ENCODE measurements at regions of chr2 and their contacts with region 1.

Region 1: GRCh38 chr2:216188956-216189355 is 79.8 kb downstream of the XRCC5 start:
- DNase-seq: no peak
- H3K4me3 ChIP-seq: no peak overlapping the region
- H3K4me3 Mint-ChIP-seq: no peak overlapping the region
- H3K27ac Mint-ChIP-seq: no peak overlapping the region
- H3K4me1 ChIP-seq: peaks cover 36% of the 10 kb centered on the region
- H3K4me1 Mint-ChIP-seq: peaks cover 27% of the 10 kb centered on the region
- H3K27me3 ChIP-seq: no peaks in the 10 kb centered on the region
- H3K27me3 Mint-ChIP-seq: no peaks in the 10 kb centered on the region
- CTCF ChIP-seq: no peak

Region 2: DNA sequence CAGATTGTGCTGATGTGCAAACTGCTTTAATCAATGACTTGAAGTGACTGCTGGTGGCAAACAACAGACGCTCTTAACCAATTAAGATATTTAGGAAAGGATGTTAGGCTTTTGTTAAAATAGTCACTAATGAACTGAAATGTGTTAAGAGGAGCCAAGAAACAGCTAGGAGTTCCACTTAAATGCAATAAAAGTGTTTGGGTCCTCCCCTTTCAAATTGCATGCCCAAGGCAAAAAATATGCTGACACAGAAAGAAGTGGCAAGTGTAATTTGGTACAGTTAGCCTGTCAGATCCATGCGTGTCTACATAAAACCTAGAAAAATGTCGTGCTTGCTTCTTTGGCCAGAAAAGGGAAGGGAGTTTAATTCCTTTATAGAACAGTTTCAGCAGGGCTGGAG is 17.9 kb before region 1 on chr2:
- CTCF ChIA-PET with region 1: interaction called, 3 read pairs
- POLR2A ChIA-PET with region 1: no interaction called
- intact Hi-C with region 1: loop called (anchors 1 kb)
- DNase-seq: no peak
- H3K4me3 ChIP-seq: no peak overlapping the region
- H3K4me3 Mint-ChIP-seq: no peak overlapping the region
- H3K27ac Mint-ChIP-seq: no peak overlapping the region
- H3K4me1 ChIP-seq: peaks cover 9% of the 10 kb centered on the region; the same call in 1 of the 2 replicates
- H3K4me1 Mint-ChIP-seq: no peaks in the 10 kb centered on the region
- H3K27me3 ChIP-seq: no peaks in the 10 kb centered on the region
- H3K27me3 Mint-ChIP-seq: no peaks in the 10 kb centered on the region
- CTCF ChIP-seq: no peak

Region 3: DNA sequence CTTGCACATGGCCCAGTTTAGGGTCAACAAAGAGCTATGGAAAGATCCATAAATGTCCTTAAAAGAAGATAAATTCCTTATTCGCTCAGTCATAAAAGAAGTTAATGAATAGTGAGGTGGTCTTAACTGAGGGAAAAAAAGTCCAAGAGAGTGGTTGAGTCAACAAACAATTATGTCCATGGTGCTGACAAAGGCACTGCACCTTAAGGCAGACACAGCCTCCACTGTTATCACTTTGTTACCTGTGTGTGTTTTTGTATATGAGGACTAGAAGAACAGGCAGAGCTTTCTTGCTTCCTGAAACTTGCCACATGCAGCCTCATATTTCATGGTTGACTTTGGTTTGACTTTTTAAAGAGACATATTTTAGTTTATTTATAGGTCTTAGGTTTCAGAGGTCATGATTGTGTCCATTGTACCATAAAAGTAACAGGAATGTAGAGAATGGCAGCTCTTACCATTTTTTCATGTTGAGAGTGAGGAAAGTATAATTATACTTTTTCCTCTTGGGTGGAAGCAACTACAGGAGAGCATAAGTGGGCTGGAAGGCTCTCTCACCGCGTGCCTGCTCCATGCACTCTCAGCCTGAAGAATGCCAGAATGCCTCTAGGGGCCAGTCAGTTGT is 13.8 kb after region 1 on chr2:
- CTCF ChIA-PET with region 1: no interaction called
- POLR2A ChIA-PET with region 1: interaction called, 4 read pairs
- intact Hi-C with region 1: loop called (anchors 1 kb)
- DNase-seq: peak; percentile 57 to 74
- H3K4me3 ChIP-seq: no peak overlapping the region
- H3K4me3 Mint-ChIP-seq: peak overlapping the region; percentile 20
- H3K27ac Mint-ChIP-seq: peak overlapping the region; percentile 61
- H3K4me1 ChIP-seq: peaks cover 25% of the 10 kb centered on the region
- H3K4me1 Mint-ChIP-seq: peaks cover 18% of the 10 kb centered on the region
- H3K27me3 ChIP-seq: no peaks in the 10 kb centered on the region
- H3K27me3 Mint-ChIP-seq: no peaks in the 10 kb centered on the region
- CTCF ChIP-seq: no peak